WTC11 (cell line): ENCODE measurements at regions of chr20 and their contacts with region 1.

Region 1: DNA sequence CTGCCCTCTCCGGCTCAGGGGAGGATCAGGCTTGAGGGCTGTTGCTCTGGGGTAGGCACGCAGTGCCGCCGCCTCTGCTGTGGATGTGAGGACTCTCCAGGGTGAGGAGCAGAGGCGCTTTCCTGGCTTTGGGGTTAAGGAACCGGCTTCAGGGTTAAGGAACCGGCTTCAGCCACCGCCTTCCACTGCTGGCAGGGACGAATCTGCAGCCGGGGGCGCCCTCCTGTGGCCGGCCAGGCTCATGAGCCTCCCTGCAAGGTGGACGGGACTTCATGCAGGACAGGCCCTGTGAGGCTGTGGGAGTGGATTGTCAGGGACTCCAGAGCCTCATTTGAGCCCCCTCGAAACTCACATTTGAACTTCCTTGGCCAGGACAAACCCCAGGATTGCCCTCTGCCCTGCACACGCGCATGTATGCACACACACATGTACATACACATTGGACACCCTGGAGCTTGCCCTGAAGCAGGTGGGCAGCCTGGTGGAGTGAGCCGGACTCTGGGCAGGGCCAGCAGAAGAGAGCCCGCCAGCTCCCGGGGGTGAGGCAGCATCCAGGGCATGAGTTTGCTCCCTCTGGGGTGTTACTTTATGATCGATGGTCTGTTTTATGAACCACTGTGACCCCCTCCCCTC is 146.8 kb downstream of the PHACTR3 start:
- DNase-seq: peak; percentile 87
- ATAC-seq: peak; percentile 89
- H3K4me3 Mint-ChIP-seq: no peak overlapping the region
- H3K27ac Mint-ChIP-seq: no peak overlapping the region
- H3K4me1 Mint-ChIP-seq: peaks cover 3% of the 10 kb centered on the region; the same call in 1 of the 2 replicates
- H3K27me3 Mint-ChIP-seq: peaks cover 49% of the 10 kb centered on the region
- CTCF ChIP-seq: peak; percentile 61

Region 2: GRCh38 chr20:59571551-59572314 is 179.4 kb before region 1 on chr20:
- CTCF ChIA-PET with region 1: interaction called, 15 read pairs
- POLR2A ChIA-PET with region 1: no interaction called
- DNase-seq: peak; percentile 84
- ATAC-seq: peak; percentile 87
- H3K4me3 Mint-ChIP-seq: peak overlapping the region; percentile 62
- H3K27ac Mint-ChIP-seq: no peak overlapping the region
- H3K4me1 Mint-ChIP-seq: peaks cover 11% of the 10 kb centered on the region
- H3K27me3 Mint-ChIP-seq: peaks cover 80% of the 10 kb centered on the region
- CTCF ChIP-seq: peak; percentile 95

Region 3: DNA sequence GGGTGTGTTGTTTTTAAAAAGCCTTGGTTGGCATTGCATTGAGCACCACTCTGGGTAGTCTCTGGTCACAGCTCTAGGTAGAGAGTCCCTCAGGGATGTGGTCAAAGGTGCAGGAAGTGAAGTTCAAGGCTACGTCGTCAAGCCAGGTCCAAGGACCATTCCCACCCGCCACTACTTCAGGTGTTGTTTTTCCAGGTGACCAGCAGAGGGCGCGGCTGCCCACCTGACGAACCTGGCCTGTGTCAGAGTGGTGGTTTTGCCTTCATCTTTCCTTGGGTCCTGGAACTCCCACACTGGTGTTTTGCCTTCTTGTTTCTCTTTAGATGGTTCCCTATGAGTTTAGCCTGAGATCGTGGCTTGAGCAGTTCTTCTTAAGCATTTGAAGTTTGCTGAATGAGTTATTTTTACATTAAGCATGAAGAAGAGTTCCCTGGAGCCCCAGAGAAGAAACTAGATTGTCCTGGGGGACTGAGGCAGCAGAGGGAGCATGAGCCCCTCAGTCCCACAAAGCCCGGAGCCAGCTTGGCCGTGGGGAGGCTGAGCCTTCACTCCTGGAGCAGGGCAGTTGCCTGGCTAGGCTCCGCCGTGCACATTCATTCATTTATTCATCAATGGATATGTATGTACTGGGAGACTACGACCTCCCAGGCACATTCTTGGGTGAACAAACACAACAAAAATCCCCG is 152.4 kb before region 1 on chr20:
- CTCF ChIA-PET with region 1: interaction called, 19 read pairs
- POLR2A ChIA-PET with region 1: no interaction called
- DNase-seq: peak; percentile 59
- ATAC-seq: peak; percentile 95
- H3K4me3 Mint-ChIP-seq: no peak overlapping the region
- H3K27ac Mint-ChIP-seq: no peak overlapping the region
- H3K4me1 Mint-ChIP-seq: no peaks in the 10 kb centered on the region
- H3K27me3 Mint-ChIP-seq: peaks cover 96% of the 10 kb centered on the region
- CTCF ChIP-seq: peak; percentile 90

Region 4: GRCh38 chr20:59678288-59678687 is 72.9 kb before region 1 on chr20:
- CTCF ChIA-PET with region 1: no interaction called
- POLR2A ChIA-PET with region 1: no interaction called
- DNase-seq: no peak
- ATAC-seq: no peak
- H3K4me3 Mint-ChIP-seq: no peak overlapping the region
- H3K27ac Mint-ChIP-seq: no peak overlapping the region
- H3K4me1 Mint-ChIP-seq: no peaks in the 10 kb centered on the region
- H3K27me3 Mint-ChIP-seq: peaks cover 51% of the 10 kb centered on the region
- CTCF ChIP-seq: no peak

Region 5: DNA sequence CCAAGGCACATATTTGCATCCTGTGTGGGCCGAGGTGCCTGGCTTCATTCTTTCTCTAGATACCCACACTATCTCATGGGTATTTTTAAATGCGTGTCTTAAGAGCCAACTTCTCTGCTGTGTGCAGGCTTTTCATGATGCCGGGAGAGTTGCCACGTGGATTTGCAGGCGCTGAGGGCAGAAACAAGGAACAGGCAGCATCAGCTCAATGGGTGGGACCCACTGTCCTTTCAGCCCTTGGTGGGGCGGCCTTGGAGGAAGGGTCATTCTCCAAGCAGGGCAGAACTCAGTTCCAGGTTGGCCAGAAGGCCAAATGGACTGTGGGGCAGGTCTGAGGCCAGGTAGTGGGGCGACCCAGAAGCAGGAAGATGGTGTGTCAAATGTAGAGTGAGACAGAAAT is 62.2 kb before region 1 on chr20:
- CTCF ChIA-PET with region 1: no interaction called
- POLR2A ChIA-PET with region 1: no interaction called
- DNase-seq: no peak
- ATAC-seq: no peak
- H3K4me3 Mint-ChIP-seq: no peak overlapping the region
- H3K27ac Mint-ChIP-seq: no peak overlapping the region
- H3K4me1 Mint-ChIP-seq: no peaks in the 10 kb centered on the region
- H3K27me3 Mint-ChIP-seq: peaks cover 25% of the 10 kb centered on the region
- CTCF ChIP-seq: no peak

Region 6: GRCh38 chr20:59735917-59736316 is 15.3 kb before region 1 on chr20:
- CTCF ChIA-PET with region 1: interaction called, 10 read pairs
- POLR2A ChIA-PET with region 1: no interaction called
- DNase-seq: no peak
- ATAC-seq: no peak
- H3K4me3 Mint-ChIP-seq: no peak overlapping the region
- H3K27ac Mint-ChIP-seq: no peak overlapping the region
- H3K4me1 Mint-ChIP-seq: no peaks in the 10 kb centered on the region; the same call in 1 of the 2 replicates
- H3K27me3 Mint-ChIP-seq: peaks cover 34% of the 10 kb centered on the region
- CTCF ChIP-seq: no peak